Panc1 (cell line): ENCODE measurements at regions of chr1 and their contacts with region 1.

Region 1: DNA sequence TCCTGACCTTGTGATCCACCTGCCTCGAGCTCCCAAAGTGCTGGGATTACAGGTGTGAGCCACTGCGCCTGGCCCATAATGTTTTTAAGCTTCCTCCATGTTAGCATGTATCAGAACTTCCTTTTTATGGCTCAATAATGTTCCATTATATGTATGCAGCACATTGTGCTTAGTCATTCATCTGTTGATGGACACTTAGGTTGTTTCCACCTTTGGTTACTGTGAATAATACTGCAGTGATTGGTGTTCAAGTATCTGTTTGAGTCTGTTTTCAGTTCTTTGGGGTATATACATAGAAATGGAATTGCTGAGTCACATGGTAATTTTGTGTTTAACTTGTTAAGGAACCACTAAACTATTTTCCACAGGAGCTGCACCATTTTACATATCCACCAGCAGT is 17.7 kb downstream of the CMPK1 start:
- DNase-seq: no peak
- ATAC-seq: no peak
- H3K4me3 ChIP-seq: no peak overlapping the region
- H3K27ac ChIP-seq: no peak overlapping the region
- H3K4me1 ChIP-seq: no peaks in the 10 kb centered on the region; the same call in 1 of the 2 replicates
- H3K27me3 ChIP-seq: no peaks in the 10 kb centered on the region
- CTCF ChIP-seq: no peak

Region 2: GRCh38 chr1:47257224-47257623 is 94.1 kb before region 1 on chr1:
- CTCF ChIA-PET with region 1: no interaction called
- POLR2A ChIA-PET with region 1: interaction called, 19 read pairs
- in situ Hi-C with region 1: no loop called
- intact Hi-C with region 1: no loop called
- DNase-seq: no peak
- ATAC-seq: no peak
- H3K4me3 ChIP-seq: no peak overlapping the region
- H3K27ac ChIP-seq: no peak overlapping the region
- H3K4me1 ChIP-seq: no peaks in the 10 kb centered on the region
- H3K27me3 ChIP-seq: no peaks in the 10 kb centered on the region
- CTCF ChIP-seq: no peak